Ascending aorta (tissue), 2 donors: ENCODE measurements at regions of chrX and their contacts with region 1.

Region 1: GRCh38 chrX:65034668-65035445 is 58.6 kb upstream of the ZC4H2 start:
- DNase-seq: peak; percentile 15 to 85
- H3K4me3 ChIP-seq: peak within 1 kb of the TSS; percentile 55 to 71
- H3K27ac ChIP-seq: peak within 1 kb of the TSS; percentile 83 to 85
- H3K4me1 ChIP-seq: no peaks in the 10 kb centered on the region
- H3K27me3 ChIP-seq: no peaks in the 10 kb centered on the region
- CTCF ChIP-seq: peak; percentile 35 to 53 (median 39)

Region 2: DNA sequence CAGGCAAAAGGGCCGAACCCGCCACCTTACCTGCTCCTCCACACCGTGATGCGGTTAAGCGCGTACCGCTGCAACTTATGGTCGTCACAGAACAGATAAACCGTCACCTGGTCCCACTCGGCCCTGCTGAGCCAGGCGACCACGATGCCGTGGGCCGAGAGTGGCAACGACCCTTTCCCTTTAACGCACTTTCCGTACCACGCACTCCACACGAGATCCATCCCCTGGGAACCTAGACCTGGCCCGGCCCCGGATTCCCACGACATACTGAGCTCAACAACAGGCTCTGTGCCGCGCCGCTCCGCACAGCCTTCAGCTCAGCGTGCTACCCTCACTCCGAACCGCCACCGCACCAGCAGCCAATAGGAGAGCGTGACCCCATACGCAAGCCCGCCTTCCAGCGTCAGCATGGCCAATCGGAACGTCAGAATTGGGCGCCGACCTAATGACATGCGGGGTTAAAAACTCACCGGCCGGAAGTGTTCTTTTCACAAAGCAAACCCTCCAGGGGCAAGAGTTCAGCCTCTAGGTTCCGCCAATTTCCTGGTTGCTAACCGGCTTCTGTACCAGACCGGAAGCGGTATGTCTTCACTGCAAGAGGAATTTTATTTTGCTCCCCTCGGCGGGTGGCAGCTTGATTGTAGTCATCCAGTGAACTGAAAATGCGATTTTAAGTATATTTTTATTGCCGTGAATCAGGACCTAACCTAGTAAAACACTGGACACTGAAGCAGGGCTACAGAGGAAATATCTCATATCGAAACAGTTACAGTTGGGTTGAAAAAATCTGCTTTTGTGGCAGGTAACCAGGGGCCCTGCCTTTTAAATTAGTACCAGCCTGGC is 499.8 kb after region 1 on chrX and contains the start of gene LAS1L:
- intact Hi-C with region 1: loop called (anchors 10 kb)
- DNase-seq: peak; percentile 76 to 95
- H3K4me3 ChIP-seq: peak within 1 kb of the TSS; percentile 58 to 74
- H3K27ac ChIP-seq: peak within 1 kb of the TSS; percentile 58 to 60
- H3K4me1 ChIP-seq: peaks cover 3 to 7% of the 10 kb centered on the region in 2 donors
- H3K27me3 ChIP-seq: no peaks in the 10 kb centered on the region
- CTCF ChIP-seq: no peak
- total RNA-seq, gene LAS1L: 8.8 TPM

Region 3: DNA sequence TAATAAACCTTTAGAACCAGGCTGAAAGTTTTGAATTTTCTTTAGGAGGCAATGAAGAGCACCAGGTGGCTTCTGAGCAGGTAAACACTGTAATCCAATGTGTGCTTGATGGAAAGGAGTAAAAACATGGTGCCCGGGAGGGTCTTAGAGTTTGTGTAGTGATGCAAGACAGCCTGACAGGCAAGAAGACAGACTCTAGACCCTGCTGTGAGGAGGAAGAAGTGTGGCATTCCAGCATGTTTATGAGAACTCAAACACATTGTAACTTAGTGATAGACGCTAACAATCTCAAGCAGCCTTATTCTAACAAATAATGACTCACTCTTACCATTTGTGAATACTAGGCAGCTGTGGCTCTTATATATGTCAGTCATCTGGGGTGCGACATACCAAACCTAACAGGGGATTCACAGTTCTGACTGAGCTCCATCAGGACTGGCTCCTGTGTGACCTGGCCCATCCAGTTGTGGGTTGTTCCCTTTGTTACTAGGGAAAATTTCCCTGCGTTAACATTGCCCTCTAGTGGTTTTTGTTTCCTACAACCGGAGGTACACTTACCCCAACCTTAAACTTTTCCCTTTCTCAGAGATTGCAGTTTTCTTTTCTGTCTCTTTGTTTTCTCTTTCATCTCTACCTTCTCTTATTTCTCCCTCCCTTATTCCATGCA is 951.2 kb after region 1 on chrX:
- intact Hi-C with region 1: no loop called
- DNase-seq: no peak
- H3K4me3 ChIP-seq: no peak overlapping the region
- H3K27ac ChIP-seq: no peak overlapping the region
- H3K4me1 ChIP-seq: no peaks in the 10 kb centered on the region
- H3K27me3 ChIP-seq: no peaks in the 10 kb centered on the region
- CTCF ChIP-seq: peak; percentile 12 to 57 (median 44)